ENCODE measurements at regions of chr11 and their contacts with region 1.

Region 1: DNA sequence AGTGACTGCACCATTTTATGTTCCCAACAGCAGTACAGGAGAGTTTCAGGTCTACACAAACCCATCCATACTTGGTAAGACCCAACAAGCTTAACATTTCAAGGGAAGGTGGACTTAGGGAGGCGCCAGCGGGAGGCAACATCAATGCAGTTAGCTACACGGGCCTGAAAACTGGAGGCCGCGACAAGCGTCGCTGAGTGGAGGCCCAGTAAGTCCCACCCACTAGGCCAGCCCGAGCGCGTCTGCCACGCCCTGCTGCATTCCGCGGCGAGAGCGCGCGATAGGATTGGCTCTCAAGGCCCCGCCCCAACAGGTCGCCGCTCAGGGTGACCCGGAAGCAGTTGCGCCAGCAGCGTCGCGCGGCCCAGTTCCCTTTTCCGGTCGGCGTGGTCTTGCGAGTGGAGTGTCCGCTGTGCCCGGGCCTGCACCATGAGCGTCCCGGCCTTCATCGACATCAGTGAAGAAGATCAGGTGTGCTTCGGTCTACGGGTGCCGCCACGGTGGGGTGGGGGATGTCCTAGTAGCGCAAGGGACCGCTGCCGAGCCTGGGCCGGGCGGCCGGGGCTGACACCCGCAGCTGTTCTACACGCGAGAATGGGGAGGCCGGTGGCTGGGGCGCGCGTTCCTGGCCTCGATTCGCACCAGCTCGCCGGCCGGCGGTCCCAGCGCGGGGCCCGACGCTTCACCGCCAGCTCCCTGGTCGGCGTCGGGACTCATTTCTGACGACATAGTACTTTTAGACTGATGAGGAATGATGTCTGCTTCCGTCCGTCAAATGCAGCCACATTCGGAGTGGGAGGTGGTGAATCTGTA is at the start of gene EIF3M:
- DNase-seq: peak; percentile 90
- ATAC-seq: peak; percentile 100
- H3K4me3 Mint-ChIP-seq: peak within 1 kb of the TSS; percentile 95
- H3K27ac Mint-ChIP-seq: peak within 1 kb of the TSS; percentile 92
- H3K4me1 Mint-ChIP-seq: peaks cover 41% of the 10 kb centered on the region
- H3K27me3 Mint-ChIP-seq: no peaks in the 10 kb centered on the region
- CTCF ChIP-seq: no peak
- total RNA-seq, gene EIF3M: 234 and 248 TPM in 2 replicates

Region 2: GRCh38 chr11:31369348-31370329 is 1214.0 kb before region 1 on chr11 and contains the starts of genes DCDC1 and DNAJC24:
- CTCF ChIA-PET with region 1: no interaction called
- POLR2A ChIA-PET with region 1: no interaction called
- intact Hi-C with region 1: loop called (anchors 5 kb)
- DNase-seq: peak; percentile 86
- ATAC-seq: peak; percentile 98
- H3K4me3 Mint-ChIP-seq: peak within 1 kb of the TSS; percentile 97
- H3K27ac Mint-ChIP-seq: peak within 1 kb of the TSS; percentile 93
- H3K4me1 Mint-ChIP-seq: peaks cover 33% of the 10 kb centered on the region
- H3K27me3 Mint-ChIP-seq: peaks cover 12% of the 10 kb centered on the region
- CTCF ChIP-seq: no peak
- total RNA-seq, gene DCDC1: not detected in 2 replicates
- total RNA-seq, gene DNAJC24: 21.2 and 26.3 TPM in 2 replicates

Region 3: GRCh38 chr11:32090545-32091373 is 492.9 kb before region 1 on chr11 and contains the start of gene RCN1:
- CTCF ChIA-PET with region 1: no interaction called
- POLR2A ChIA-PET with region 1: no interaction called
- intact Hi-C with region 1: loop called (anchors 2 kb)
- DNase-seq: peak; percentile 50
- ATAC-seq: peak; percentile 66
- H3K4me3 Mint-ChIP-seq: peak within 1 kb of the TSS; percentile 86
- H3K27ac Mint-ChIP-seq: peak within 1 kb of the TSS; percentile 81
- H3K4me1 Mint-ChIP-seq: peaks cover 18% of the 10 kb centered on the region
- H3K27me3 Mint-ChIP-seq: peaks cover 9% of the 10 kb centered on the region
- CTCF ChIP-seq: no peak
- total RNA-seq, gene RCN1: 14.5 and 15.8 TPM in 2 replicates

Region 4: GRCh38 chr11:32643526-32643925 is 59.9 kb after region 1 on chr11:
- CTCF ChIA-PET with region 1: no interaction called
- POLR2A ChIA-PET with region 1: no interaction called
- intact Hi-C with region 1: no loop called
- DNase-seq: no peak
- ATAC-seq: no peak
- H3K4me3 Mint-ChIP-seq: no peak overlapping the region
- H3K27ac Mint-ChIP-seq: no peak overlapping the region
- H3K4me1 Mint-ChIP-seq: no peaks in the 10 kb centered on the region
- H3K27me3 Mint-ChIP-seq: peaks cover 6% of the 10 kb centered on the region
- CTCF ChIP-seq: no peak

Region 5: GRCh38 chr11:32893343-32894148 is 309.9 kb after region 1 on chr11:
- CTCF ChIA-PET with region 1: no interaction called
- POLR2A ChIA-PET with region 1: interaction called, 10 read pairs
- intact Hi-C with region 1: loop called (anchors 2 kb)
- DNase-seq: peak; percentile 65
- ATAC-seq: peak; percentile 51
- H3K4me3 Mint-ChIP-seq: peak overlapping the region; percentile 94
- H3K27ac Mint-ChIP-seq: peak overlapping the region; percentile 82
- H3K4me1 Mint-ChIP-seq: peaks cover 30% of the 10 kb centered on the region
- H3K27me3 Mint-ChIP-seq: no peaks in the 10 kb centered on the region
- CTCF ChIP-seq: no peak

Region 6: GRCh38 chr11:34105079-34105956 is 1521.7 kb after region 1 on chr11 and contains the start of gene NAT10:
- CTCF ChIA-PET with region 1: no interaction called
- POLR2A ChIA-PET with region 1: no interaction called
- intact Hi-C with region 1: loop called (anchors 5 kb)
- DNase-seq: peak; percentile 91
- ATAC-seq: peak; percentile 92
- H3K4me3 Mint-ChIP-seq: peak within 1 kb of the TSS; percentile 97
- H3K27ac Mint-ChIP-seq: peak within 1 kb of the TSS; percentile 98
- H3K4me1 Mint-ChIP-seq: peaks cover 41% of the 10 kb centered on the region
- H3K27me3 Mint-ChIP-seq: peaks cover 2% of the 10 kb centered on the region
- CTCF ChIP-seq: no peak
- total RNA-seq, gene NAT10: 107 and 120 TPM in 2 replicates

Measured in activated B cell treated with CpG ODN at 0.5 μM for 24 hours (primary cell).